GM10248 (cell line): ENCODE measurements at regions of chr14 and their contacts with region 1.

Region 1: GRCh38 chr14:70816525-70816924 is 7.2 kb upstream of the MAP3K9 start:
- DNase-seq: no peak
- CTCF ChIP-seq: no peak

Region 2: GRCh38 chr14:70622111-70622712 is 194.3 kb before region 1 on chr14:
- CTCF ChIA-PET with region 1: interaction called, 19 read pairs
- POLR2A ChIA-PET with region 1: no interaction called
- DNase-seq: peak; percentile 66
- CTCF ChIP-seq: peak; percentile 70

Region 3: DNA sequence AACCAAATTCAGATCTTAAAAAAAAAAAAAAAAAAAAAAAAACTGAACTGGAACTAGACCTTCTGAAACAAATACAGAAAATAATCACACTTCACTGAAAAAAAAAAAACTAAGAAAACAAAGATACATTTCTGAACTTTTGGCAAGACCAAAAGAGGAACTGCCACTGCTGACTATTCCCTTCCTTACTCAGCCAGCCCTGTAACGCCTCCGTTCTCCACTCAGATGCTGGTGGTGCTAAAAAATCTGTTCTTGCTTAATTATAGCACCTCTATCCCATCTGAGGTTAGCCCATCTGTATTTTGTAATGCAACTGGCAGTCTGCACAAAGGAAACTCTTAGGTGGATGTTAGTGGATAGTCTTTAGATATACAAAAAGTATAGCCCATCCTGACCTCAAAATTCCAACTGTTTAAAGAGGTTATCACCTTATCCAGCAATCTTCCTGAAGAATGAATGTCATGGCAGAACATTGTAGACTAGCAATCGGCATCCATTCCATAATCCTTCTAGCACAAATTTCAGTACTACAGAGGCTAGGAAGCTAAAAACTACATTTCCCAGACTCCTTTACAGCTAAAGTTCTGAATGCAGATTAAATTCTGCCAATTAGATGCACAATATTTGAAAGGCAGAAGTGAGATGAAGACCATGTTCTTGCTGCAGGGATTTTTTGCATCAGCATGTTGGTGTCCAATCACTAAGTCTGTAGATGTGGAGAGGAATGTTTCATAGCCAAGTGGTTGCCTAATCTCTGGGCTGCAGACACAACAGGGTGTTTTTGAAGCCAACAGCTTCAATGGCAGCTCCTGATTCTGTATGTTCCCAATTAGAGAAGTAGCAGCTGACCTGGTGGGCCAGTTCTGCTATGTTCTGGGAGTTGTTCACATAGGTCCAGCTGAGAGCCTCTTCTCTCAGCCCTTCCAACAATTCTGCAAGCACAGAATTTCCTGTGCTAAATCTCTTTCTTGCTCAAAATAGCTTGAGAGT is 12.9 kb before region 1 on chr14:
- CTCF ChIA-PET with region 1: interaction called, 33 read pairs
- POLR2A ChIA-PET with region 1: no interaction called
- DNase-seq: peak; percentile 75
- CTCF ChIP-seq: no peak

Region 4: DNA sequence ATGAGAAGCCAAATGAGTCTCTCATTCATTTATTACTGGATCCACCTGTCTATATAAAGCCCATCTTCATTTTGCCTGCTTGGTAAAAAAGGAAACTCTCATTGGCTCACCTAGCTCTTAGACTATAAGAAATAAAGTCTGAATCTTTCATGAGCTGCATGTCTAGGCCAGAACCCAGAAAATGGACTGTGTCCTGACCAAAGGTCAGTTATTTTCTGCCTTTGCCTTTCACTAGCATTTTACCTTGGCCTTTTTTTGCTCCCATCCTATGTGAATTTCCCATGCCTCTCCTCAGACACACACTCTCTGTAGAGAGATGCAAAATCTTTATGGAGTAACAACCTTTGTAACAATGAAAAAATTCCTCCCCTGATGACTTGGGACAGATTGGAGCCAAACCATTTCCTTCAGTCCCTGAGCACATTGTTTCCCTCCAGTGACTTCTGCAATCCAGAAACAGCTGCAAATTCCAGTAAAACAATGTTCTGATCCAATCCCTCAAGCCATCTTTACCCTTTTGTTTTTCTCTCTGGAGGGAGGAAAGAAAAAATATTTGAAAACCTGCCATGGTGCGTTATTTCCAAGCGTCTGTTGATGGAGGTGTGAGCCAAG is 26.4 kb after region 1 on chr14:
- CTCF ChIA-PET with region 1: interaction called, 10 read pairs
- POLR2A ChIA-PET with region 1: no interaction called
- DNase-seq: no peak
- CTCF ChIP-seq: no peak

Region 5: GRCh38 chr14:70873627-70874026 is 57.1 kb after region 1 on chr14:
- CTCF ChIA-PET with region 1: interaction called, 14 read pairs
- POLR2A ChIA-PET with region 1: no interaction called
- DNase-seq: no peak
- CTCF ChIP-seq: no peak

Region 6: GRCh38 chr14:70955543-70956480 is 139.3 kb after region 1 on chr14:
- CTCF ChIA-PET with region 1: interaction called, 21 read pairs
- POLR2A ChIA-PET with region 1: no interaction called
- DNase-seq: peak; percentile 13
- CTCF ChIP-seq: peak; percentile 68

Region 7: DNA sequence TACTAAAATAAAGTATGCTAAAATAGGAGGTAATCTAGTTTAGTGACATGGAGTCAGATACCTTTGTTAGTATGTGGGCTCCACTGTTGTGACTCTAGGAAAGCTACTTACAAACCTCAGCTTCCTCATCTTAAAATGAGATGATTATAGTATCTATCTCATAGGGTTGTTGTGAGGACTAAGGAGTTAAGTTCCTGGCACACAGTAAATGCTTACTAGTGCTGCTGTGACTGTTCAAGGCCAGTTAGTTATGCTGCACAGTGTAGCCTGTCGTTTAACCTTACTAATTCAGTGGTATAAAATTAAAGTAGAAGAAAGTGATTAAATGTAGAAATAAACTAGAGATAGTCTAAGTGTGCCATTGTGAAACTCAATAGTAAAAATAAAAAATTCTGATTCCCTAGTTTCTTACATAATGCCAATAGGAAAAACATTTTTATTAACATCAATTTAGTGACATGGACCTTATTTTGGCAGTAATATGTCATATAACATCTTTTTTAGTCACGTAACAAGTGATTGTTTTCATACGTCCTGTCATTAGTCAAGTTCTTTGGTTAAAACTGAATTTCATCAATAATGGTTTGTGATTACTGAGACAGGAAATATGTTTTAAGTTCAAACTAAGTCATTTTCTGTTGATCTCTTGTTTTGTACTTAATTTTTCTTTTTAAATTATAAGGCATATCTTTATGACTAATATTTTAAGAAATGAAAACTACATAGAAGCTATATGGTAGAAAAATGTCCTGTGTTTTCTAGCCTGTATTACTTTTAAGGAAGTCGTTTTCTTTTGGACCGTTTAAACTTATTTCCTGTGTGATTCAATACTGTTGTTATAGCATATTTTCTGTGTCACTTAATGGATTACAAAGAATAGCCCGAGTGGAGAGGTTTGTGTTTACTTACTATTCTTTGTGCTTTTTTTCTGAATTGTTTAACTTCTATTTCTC is 164.8 kb after region 1 on chr14:
- CTCF ChIA-PET with region 1: interaction called, 24 read pairs
- POLR2A ChIA-PET with region 1: no interaction called
- DNase-seq: no peak
- CTCF ChIP-seq: no peak